GM12878 (cell line): ENCODE measurements at regions of chr10 and their contacts with region 1.

Region 1: DNA sequence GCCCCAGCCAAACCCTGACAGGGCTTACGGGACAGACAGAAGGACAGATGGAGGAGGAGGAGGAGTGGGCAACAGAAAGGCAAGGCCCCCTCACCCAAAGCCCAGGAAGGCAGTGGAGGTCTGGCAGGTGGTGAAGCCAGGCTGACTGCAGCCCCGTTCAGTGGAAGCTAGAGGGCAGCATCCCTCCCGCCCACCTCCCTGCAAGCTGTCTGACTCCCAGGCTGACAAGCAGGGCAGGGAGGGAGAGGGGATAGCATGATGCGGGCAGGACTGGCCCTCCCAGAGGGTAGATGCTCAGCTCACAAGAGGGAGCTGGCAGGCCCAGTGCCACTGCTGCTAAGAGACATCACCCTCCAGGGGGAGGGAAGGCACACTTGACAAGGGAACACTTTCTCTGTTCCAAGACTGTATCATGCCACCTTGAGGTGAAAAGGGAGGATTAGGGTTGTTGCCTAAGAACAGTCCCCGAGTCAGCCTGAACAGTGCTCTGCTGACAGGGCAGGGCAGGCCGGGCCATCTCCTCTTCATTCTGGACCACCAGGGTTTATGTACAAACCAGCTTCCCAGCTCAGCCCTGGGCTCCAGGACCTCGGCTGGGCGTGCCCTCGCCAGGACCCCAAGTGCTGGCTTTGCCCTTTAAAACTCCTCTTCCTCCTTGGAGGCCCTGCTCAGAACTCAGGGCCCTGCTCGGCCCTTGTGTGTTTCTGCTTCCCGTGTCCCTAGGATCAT is 61.8 kb downstream of the RASGEF1A start:
- DNase-seq: peak; percentile 11
- ATAC-seq: peak; percentile 82
- H3K4me3 ChIP-seq: no peak overlapping the region
- H3K27ac ChIP-seq: no peak overlapping the region
- H3K4me1 ChIP-seq: no peaks in the 10 kb centered on the region
- H3K27me3 ChIP-seq: no peaks in the 10 kb centered on the region
- CTCF ChIP-seq: peak; percentile 76 to 93 (median 88)
- EP300 ChIP-seq: no peak
- POLR2A ChIP-seq: no peak
- RAD21 ChIP-seq: peak; percentile 50

Region 2: DNA sequence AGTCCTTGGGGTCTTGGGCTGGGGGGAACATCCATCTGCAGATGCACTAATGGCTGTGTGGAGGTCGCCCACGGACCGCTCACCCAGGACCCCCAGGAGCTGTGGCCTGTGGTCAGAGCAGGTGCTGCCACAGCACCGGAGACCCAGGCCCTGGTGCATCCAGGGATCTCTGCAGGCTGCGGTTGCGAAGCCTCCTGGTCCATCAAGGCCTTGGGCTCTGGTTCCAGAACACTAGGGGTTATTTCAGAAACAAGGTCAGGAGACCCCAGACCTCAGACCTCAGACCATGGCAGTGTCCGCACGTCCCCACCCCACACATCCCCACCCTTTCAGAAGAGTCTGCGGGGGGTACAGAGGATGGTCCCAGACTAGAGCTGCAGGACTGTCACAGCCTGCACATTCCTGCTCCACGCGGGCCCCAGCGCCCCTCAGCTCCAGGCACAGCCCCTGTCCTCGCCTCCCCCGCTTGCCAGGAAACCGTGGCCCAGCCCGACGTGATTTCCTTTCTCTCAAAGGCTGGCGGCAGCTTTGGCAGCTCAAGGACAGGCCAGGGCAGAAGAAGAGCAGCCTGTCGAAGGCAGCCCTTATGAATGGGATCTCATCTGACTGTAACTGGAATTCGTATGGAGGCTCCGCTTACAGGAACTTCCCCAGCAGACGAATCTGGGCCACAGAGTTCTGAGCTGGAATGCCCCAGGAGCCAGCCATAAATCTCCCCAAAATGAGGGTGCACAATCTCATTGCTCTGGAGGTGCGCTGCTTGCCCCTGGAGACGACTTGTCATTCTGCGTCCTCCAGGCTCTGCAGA is 264.4 kb before region 1 on chr10:
- CTCF ChIA-PET with region 1: no interaction called
- POLR2A ChIA-PET with region 1: no interaction called
- RAD21 ChIA-PET with region 1: no interaction called
- SMC1A ChIA-PET with region 1: no interaction called
- in situ Hi-C with region 1: no loop called
- intact Hi-C with region 1: no loop called
- DNase-seq: no peak
- ATAC-seq: no peak
- H3K4me3 ChIP-seq: no peak overlapping the region
- H3K27ac ChIP-seq: no peak overlapping the region
- H3K4me1 ChIP-seq: no peaks in the 10 kb centered on the region
- H3K27me3 ChIP-seq: no peaks in the 10 kb centered on the region; a peak in 1 of 4 replicates
- CTCF ChIP-seq: no peak
- EP300 ChIP-seq: no peak
- POLR2A ChIP-seq: no peak
- RAD21 ChIP-seq: no peak

Region 3: DNA sequence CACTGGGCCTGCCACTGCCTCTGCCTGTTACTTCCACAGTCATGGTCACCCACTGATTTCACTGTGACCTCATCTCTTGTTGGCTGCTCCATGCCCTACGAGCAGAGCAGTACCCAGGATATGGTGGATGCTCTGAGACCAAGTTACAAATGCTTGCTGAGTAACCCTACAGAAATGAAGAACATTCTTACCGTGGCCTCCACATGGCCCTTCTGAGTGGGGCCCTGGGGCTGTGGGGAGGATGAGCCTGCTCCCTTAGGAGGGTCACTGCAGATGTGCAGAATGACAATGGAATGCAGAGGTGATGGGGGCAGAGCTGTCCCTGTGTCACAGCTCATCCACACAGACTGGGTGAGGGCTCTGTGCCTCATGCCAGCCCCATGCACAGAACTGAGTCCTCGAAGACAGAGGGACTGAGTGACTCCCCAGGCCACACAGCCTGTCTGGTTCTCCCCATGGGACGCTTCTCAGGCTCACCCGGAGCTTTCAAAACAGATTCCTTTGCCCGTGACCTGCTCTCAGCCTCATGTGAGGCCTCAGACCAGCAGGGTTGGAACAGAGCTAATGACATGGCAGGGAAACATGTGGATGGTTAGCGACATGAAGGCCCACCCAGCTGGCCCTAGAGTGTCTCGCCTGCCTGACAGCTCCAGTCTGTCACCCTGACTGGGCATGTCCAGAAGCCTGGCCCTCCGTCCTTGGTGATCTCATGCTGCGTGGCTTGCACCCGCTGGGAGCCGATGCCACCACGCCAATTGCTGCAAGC is 156.3 kb before region 1 on chr10:
- CTCF ChIA-PET with region 1: no interaction called
- POLR2A ChIA-PET with region 1: no interaction called
- RAD21 ChIA-PET with region 1: no interaction called
- SMC1A ChIA-PET with region 1: no interaction called
- in situ Hi-C with region 1: no loop called
- intact Hi-C with region 1: no loop called
- DNase-seq: no peak
- ATAC-seq: no peak
- H3K4me3 ChIP-seq: no peak overlapping the region
- H3K27ac ChIP-seq: no peak overlapping the region
- H3K4me1 ChIP-seq: no peaks in the 10 kb centered on the region
- H3K27me3 ChIP-seq: no peaks in the 10 kb centered on the region; a peak in 1 of 4 replicates
- CTCF ChIP-seq: no peak
- EP300 ChIP-seq: no peak
- POLR2A ChIP-seq: no peak
- RAD21 ChIP-seq: no peak

Region 4: GRCh38 chr10:43221419-43222209 is 16.5 kb after region 1 on chr10:
- CTCF ChIA-PET with region 1: interaction called, 29 read pairs
- POLR2A ChIA-PET with region 1: interaction called, 4 read pairs
- RAD21 ChIA-PET with region 1: interaction called, 5 read pairs
- SMC1A ChIA-PET with region 1: interaction called, 4 read pairs
- in situ Hi-C with region 1: no loop called
- intact Hi-C with region 1: no loop called
- DNase-seq: no peak
- ATAC-seq: peak; percentile 65
- H3K4me3 ChIP-seq: no peak overlapping the region
- H3K27ac ChIP-seq: no peak overlapping the region
- H3K4me1 ChIP-seq: peaks cover 8% of the 10 kb centered on the region
- H3K27me3 ChIP-seq: peaks cover 0 to 1% of the 10 kb centered on the region in 2 experiments; a peak in 2 of 4 replicates
- CTCF ChIP-seq: peak in 2 of 3 experiments; percentile 4 to 27; a peak in 3 of 6 replicates
- EP300 ChIP-seq: no peak
- POLR2A ChIP-seq: no peak
- RAD21 ChIP-seq: no peak

Region 5: DNA sequence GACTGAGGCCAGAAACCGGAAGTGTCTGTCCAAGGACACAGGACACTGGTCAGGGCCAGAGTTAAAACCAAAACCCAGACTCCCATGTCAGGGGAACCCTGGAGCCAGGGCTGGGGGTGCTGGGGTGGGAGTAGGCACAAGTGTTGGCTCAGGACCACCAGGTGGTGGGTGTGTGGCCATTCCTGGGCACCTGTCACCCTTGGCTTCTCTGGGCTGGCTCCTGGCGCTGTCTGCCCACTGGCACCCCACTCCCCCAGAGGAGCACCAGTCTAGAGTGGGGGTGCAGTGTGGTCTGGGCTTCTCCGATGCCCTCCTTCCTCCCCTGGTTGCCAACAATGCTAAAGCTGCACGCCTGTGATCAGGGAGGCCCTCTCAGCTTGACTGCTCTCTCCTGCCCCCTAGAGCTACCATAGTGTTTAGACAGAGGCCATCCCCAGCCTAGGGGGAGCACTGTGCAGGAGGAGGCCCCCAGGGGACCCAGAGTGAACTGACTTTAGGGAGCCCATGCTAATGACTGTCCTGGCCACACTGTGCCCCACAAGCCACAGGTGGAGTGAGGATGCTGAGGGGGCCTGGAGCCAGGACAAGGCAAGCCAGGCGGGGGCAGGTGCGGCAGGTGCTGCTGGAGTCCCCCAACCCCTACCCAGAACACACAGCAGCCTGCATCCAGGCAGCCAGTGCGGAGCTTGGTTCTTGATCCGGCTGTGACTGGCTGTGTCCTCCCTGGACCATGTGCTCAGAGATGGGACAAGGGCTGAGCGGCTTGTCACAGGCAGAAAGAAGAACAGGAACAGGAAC is 50.7 kb after region 1 on chr10:
- CTCF ChIA-PET with region 1: interaction called, 60 read pairs
- POLR2A ChIA-PET with region 1: no interaction called
- RAD21 ChIA-PET with region 1: interaction called, 22 read pairs
- SMC1A ChIA-PET with region 1: interaction called, 14 read pairs
- in situ Hi-C with region 1: no loop called
- intact Hi-C with region 1: no loop called
- DNase-seq: no peak
- ATAC-seq: peak; percentile 85
- H3K4me3 ChIP-seq: no peak overlapping the region
- H3K27ac ChIP-seq: no peak overlapping the region
- H3K4me1 ChIP-seq: no peaks in the 10 kb centered on the region
- H3K27me3 ChIP-seq: no peaks in the 10 kb centered on the region
- CTCF ChIP-seq: peak; percentile 57 to 62 (median 60)
- EP300 ChIP-seq: no peak
- POLR2A ChIP-seq: no peak
- RAD21 ChIP-seq: peak; percentile 33

Region 6: GRCh38 chr10:43348511-43349312 is 143.6 kb after region 1 on chr10:
- CTCF ChIA-PET with region 1: interaction called, 11 read pairs
- POLR2A ChIA-PET with region 1: no interaction called
- RAD21 ChIA-PET with region 1: interaction called, 3 read pairs
- SMC1A ChIA-PET with region 1: interaction called, 3 read pairs
- in situ Hi-C with region 1: loop called (anchors 25 kb)
- intact Hi-C with region 1: loop called (anchors 10 kb)
- DNase-seq: peak; percentile 36
- ATAC-seq: peak; percentile 100
- H3K4me3 ChIP-seq: no peak overlapping the region
- H3K27ac ChIP-seq: no peak overlapping the region
- H3K4me1 ChIP-seq: no peaks in the 10 kb centered on the region
- H3K27me3 ChIP-seq: peaks cover 0 to 2% of the 10 kb centered on the region in 2 experiments; a peak in 1 of 4 replicates
- CTCF ChIP-seq: peak; percentile 94 to 97 (median 95)
- EP300 ChIP-seq: no peak
- POLR2A ChIP-seq: no peak
- RAD21 ChIP-seq: peak; percentile 86

Region 7: GRCh38 chr10:43461950-43462349 is 256.8 kb after region 1 on chr10:
- CTCF ChIA-PET with region 1: interaction called, 4 read pairs
- POLR2A ChIA-PET with region 1: no interaction called
- RAD21 ChIA-PET with region 1: no interaction called
- SMC1A ChIA-PET with region 1: no interaction called
- in situ Hi-C with region 1: loop called (anchors 10 kb)
- intact Hi-C with region 1: loop called (anchors 5 kb)
- DNase-seq: no peak
- ATAC-seq: peak; percentile 95
- H3K4me3 ChIP-seq: no peak overlapping the region
- H3K27ac ChIP-seq: no peak overlapping the region
- H3K4me1 ChIP-seq: no peaks in the 10 kb centered on the region
- H3K27me3 ChIP-seq: no peaks in the 10 kb centered on the region
- CTCF ChIP-seq: peak; percentile 52 to 68 (median 56); a peak in 5 of 6 replicates
- EP300 ChIP-seq: no peak
- POLR2A ChIP-seq: no peak
- RAD21 ChIP-seq: peak; percentile 84